ENCODE measurements at regions of chr1 and their contacts with region 1.

Region 1: GRCh38 chr1:232630047-232630893 is at the start of gene SIPA1L2:
- DNase-seq: peak; percentile 97
- H3K4me3 Mint-ChIP-seq: peak within 1 kb of the TSS; percentile 97
- H3K27ac Mint-ChIP-seq: peak within 1 kb of the TSS; percentile 76
- H3K4me1 Mint-ChIP-seq: peaks cover 33% of the 10 kb centered on the region
- H3K27me3 Mint-ChIP-seq: no peaks in the 10 kb centered on the region
- CTCF ChIP-seq: peak; percentile 72
- total RNA-seq, gene SIPA1L2: 15.2 and 18.3 TPM in 2 replicates

Region 2: DNA sequence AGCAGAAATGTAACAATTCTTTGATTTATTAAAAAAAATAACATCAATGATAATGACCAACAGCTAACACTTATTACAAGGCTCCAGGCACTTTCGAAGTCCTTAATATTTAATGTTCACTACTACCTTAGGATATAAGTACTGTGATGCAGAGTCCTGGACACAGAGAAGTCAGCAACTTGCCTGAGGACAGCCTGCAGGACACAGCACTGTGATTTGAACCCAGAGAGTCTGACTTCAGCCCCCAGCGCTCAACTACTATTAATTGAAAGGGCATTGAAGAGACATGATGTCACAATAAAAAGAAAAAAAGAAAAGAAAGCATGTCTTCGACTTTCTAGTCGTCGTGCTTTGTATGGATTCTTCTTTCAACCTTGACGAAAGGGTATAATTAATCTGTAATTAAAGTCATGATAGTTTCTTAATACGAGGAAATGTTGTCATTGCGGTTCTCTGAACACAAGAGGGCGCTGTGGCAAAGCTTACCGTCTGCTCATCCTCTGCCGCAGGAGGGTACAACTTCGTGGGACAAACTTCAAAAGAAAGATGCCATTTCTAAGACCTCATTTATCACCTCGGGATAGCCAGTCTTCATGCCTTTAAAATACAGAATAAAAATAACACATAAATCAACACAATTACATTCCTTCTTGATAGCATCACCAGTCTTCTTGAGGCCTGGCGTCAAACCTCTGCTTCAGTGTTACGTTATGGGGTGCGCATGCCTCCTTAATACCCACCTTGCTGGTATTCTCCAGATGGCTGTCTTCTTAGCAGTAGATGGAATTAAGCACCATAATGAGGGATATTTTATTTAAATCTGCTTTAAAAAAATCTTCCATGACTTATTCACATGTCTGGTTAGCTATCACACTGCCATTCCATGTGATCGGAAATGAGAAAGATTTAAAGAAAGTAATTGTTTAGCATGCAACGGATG is 763.6 kb before region 1 on chr1:
- CTCF ChIA-PET with region 1: interaction called, 154 read pairs
- POLR2A ChIA-PET with region 1: interaction called, 31 read pairs
- intact Hi-C with region 1: loop called (anchors 1 kb)
- DNase-seq: peak; percentile 89
- H3K4me3 Mint-ChIP-seq: no peak overlapping the region
- H3K27ac Mint-ChIP-seq: peak overlapping the region; percentile 60
- H3K4me1 Mint-ChIP-seq: peaks cover 20% of the 10 kb centered on the region
- H3K27me3 Mint-ChIP-seq: no peaks in the 10 kb centered on the region
- CTCF ChIP-seq: peak; percentile 100

Region 3: GRCh38 chr1:232226197-232226712 is 404.0 kb before region 1 on chr1:
- CTCF ChIA-PET with region 1: interaction called, 13 read pairs
- POLR2A ChIA-PET with region 1: interaction called, 6 read pairs
- intact Hi-C with region 1: loop called (anchors 1 kb)
- DNase-seq: peak; percentile 96
- H3K4me3 Mint-ChIP-seq: peak overlapping the region; percentile 5
- H3K27ac Mint-ChIP-seq: peak overlapping the region; percentile 10
- H3K4me1 Mint-ChIP-seq: peaks cover 52% of the 10 kb centered on the region
- H3K27me3 Mint-ChIP-seq: no peaks in the 10 kb centered on the region
- CTCF ChIP-seq: no peak

Region 4: DNA sequence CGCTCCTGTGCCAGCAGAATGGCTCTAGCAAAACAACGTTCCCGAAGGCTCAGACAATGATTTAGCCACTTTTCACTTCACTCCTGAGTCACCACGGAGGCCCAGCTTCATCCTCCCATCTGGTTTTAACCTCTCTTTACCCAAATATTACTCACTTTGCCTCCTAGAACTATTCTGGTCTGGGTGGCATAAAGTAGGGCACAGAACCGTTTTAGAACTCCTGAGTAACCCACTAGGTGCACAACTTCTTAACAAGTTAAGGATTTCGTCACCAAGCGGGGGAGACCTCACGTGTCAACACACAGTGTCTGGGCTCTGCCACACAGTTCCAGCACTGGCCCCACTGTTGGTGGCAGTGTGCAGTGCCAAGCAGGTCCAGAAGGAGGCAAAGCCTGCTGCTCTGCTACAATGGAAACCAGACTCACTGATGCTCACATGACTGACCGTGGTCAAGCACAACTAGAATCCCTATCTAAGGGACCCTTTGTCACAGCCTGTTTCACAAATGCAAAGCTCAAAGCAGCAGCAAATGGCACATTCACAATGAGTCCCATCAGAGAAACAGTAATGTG is 122.1 kb before region 1 on chr1:
- CTCF ChIA-PET with region 1: interaction called, 16 read pairs
- POLR2A ChIA-PET with region 1: interaction called, 7 read pairs
- intact Hi-C with region 1: no loop called
- DNase-seq: peak; percentile 40
- H3K4me3 Mint-ChIP-seq: no peak overlapping the region
- H3K27ac Mint-ChIP-seq: peak overlapping the region; percentile 70
- H3K4me1 Mint-ChIP-seq: peaks cover 40% of the 10 kb centered on the region
- H3K27me3 Mint-ChIP-seq: no peaks in the 10 kb centered on the region
- CTCF ChIP-seq: peak; percentile 5

Region 5: DNA sequence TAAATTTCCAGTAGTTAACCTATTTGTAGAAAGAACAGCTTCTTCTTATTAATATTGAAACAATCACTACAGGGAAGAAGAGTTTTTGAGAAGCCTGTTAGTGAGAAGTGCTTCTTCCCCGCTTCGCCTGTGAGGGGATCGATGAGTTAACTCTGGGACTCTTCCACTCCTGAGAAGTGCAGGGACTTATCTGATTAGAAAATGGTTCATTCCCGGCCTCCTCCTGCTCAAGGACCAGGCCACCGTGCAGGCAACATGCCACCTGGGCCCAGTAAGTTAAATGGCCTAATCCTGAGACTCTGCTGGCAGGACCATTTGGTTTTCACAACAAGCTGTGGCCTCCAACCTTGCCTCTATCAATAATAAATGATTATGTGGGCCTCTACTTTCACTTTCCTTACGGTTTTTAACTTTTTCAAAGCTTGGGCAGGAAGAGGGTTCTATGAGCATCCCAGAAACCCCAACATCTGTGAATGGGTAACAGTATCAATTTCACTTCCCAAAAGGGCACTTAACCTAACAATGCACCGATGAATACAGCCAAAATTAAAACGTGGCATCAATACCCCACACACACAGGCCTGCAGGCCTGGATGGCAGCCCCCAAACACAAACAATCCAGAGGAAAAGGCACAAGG is 33.5 kb before region 1 on chr1:
- CTCF ChIA-PET with region 1: interaction called, 17 read pairs
- POLR2A ChIA-PET with region 1: interaction called, 3 read pairs
- intact Hi-C with region 1: no loop called
- DNase-seq: no peak
- H3K4me3 Mint-ChIP-seq: no peak overlapping the region
- H3K27ac Mint-ChIP-seq: no peak overlapping the region
- H3K4me1 Mint-ChIP-seq: peaks cover 19% of the 10 kb centered on the region
- H3K27me3 Mint-ChIP-seq: no peaks in the 10 kb centered on the region
- CTCF ChIP-seq: no peak

Region 6: GRCh38 chr1:232837087-232837486 is 206.8 kb after region 1 on chr1:
- CTCF ChIA-PET with region 1: no interaction called
- POLR2A ChIA-PET with region 1: no interaction called
- intact Hi-C with region 1: no loop called
- DNase-seq: peak; percentile 33
- H3K4me3 Mint-ChIP-seq: no peak overlapping the region
- H3K27ac Mint-ChIP-seq: no peak overlapping the region
- H3K4me1 Mint-ChIP-seq: peaks cover 4% of the 10 kb centered on the region
- H3K27me3 Mint-ChIP-seq: no peaks in the 10 kb centered on the region
- CTCF ChIP-seq: no peak

Region 7: GRCh38 chr1:232950197-232951176 is 320.2 kb after region 1 on chr1 and contains the start of gene NTPCR:
- CTCF ChIA-PET with region 1: interaction called, 12 read pairs
- POLR2A ChIA-PET with region 1: interaction called, 14 read pairs
- intact Hi-C with region 1: loop called (anchors 1 kb)
- DNase-seq: peak; percentile 98
- H3K4me3 Mint-ChIP-seq: peak within 1 kb of the TSS; percentile 89
- H3K27ac Mint-ChIP-seq: peak within 1 kb of the TSS; percentile 84
- H3K4me1 Mint-ChIP-seq: peaks cover 37% of the 10 kb centered on the region
- H3K27me3 Mint-ChIP-seq: no peaks in the 10 kb centered on the region
- CTCF ChIP-seq: peak; percentile 20
- total RNA-seq, gene NTPCR: 116 and 129 TPM in 2 replicates